Activated B cell treated with CpG ODN at 0.5 μM for 24 hours (primary cell): ENCODE measurements at regions of chr3 and their contacts with region 1.

Region 1: DNA sequence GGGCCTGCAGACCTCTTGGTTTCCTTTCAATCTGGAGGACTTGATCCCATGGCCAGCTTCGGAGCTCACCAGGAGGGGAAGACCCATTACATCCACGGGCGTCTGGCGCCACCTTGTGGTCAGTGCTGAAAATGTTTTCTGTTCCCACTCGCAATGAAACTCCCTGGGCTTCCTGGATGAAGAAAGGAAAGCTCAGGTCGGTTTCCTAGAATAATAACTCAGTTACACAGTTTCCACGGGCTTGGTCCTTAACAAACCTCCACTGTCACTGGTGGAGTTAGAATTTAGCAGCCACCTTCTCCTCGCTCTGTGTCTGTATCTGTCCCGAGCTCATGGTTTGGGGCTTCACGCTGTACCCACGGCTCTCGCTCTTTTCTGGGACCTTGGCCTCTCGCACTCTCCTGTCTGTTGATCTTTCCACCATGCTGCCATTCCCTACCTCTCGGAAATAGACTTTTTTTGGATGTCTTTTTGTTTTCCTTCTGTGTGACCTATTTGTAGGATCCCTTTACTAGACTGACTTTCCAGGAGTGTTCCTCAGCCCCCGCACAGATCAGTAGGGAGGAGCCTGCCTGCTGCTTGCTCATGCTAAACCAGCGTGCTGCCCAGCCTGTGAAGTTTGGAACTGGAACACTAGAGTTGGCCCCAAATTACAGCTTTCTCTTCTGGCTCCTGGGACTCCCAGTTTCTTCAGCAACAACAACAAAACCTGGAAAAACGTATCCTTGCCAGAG is 56.3 kb downstream of the IL20RB start:
- DNase-seq: peak; percentile 76
- ATAC-seq: peak; percentile 88
- H3K4me3 Mint-ChIP-seq: peak overlapping the region; percentile 65
- H3K27ac Mint-ChIP-seq: no peak overlapping the region
- H3K4me1 Mint-ChIP-seq: peaks cover 8% of the 10 kb centered on the region
- H3K27me3 Mint-ChIP-seq: no peaks in the 10 kb centered on the region
- CTCF ChIP-seq: no peak

Region 2: GRCh38 chr3:136250226-136250902 is 763.8 kb before region 1 on chr3 and contains the start of gene PCCB:
- CTCF ChIA-PET with region 1: no interaction called
- POLR2A ChIA-PET with region 1: no interaction called
- intact Hi-C with region 1: loop called (anchors 5 kb)
- DNase-seq: peak; percentile 88
- ATAC-seq: peak; percentile 96
- H3K4me3 Mint-ChIP-seq: peak within 1 kb of the TSS; percentile 92
- H3K27ac Mint-ChIP-seq: peak within 1 kb of the TSS; percentile 95
- H3K4me1 Mint-ChIP-seq: peaks cover 23% of the 10 kb centered on the region
- H3K27me3 Mint-ChIP-seq: no peaks in the 10 kb centered on the region
- CTCF ChIP-seq: no peak
- total RNA-seq, gene PCCB: 31.2 and 31.8 TPM in 2 replicates

Region 3: GRCh38 chr3:136390574-136390973 is 623.5 kb before region 1 on chr3:
- CTCF ChIA-PET with region 1: interaction called, 83 read pairs
- POLR2A ChIA-PET with region 1: no interaction called
- intact Hi-C with region 1: loop called (anchors 1 kb)
- DNase-seq: no peak
- ATAC-seq: no peak
- H3K4me3 Mint-ChIP-seq: no peak overlapping the region
- H3K27ac Mint-ChIP-seq: no peak overlapping the region
- H3K4me1 Mint-ChIP-seq: peaks cover 3% of the 10 kb centered on the region
- H3K27me3 Mint-ChIP-seq: no peaks in the 10 kb centered on the region
- CTCF ChIP-seq: no peak

Region 4: GRCh38 chr3:136624894-136625815 is 389.0 kb before region 1 on chr3:
- CTCF ChIA-PET with region 1: no interaction called
- POLR2A ChIA-PET with region 1: no interaction called
- intact Hi-C with region 1: loop called (anchors 10 kb)
- DNase-seq: no peak
- ATAC-seq: peak; percentile 49
- H3K4me3 Mint-ChIP-seq: no peak overlapping the region
- H3K27ac Mint-ChIP-seq: no peak overlapping the region
- H3K4me1 Mint-ChIP-seq: peaks cover 38% of the 10 kb centered on the region
- H3K27me3 Mint-ChIP-seq: no peaks in the 10 kb centered on the region
- CTCF ChIP-seq: no peak

Region 5: DNA sequence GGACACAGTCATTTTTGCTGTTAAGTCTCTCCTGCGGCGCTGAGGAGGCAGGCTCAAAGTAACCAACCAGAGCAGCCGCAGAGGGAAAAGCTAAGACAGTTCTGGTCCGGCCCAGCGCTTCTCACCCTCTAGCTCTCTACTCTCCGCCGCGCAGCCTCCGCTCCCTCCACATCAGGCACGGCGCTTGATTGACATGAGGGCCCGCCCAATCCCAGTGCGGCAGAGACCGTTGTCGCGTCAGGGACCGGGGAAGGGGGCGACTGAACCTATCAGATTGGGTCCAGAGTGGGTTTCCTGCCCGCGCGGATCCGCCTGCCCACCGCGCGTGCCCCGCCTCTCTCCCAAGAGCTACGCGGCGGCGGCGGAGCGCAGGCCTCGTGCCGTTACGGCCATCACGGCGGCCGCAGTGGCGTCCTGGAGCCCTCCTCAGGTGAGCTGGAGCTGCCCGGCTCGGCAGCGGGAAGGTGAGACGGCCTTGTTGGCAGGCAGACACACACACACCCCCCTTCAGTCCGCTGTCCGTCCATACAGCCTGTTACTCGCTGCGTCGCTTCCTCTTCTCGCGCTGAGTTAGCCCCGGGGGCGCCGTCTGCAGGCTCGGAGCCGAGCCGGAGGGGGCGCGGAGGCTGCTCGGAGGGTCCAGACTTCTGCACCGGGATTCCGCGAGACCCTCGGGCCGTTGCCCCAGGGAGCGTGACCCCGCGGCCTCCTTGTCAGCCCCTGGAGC is 152.1 kb before region 1 on chr3 and contains the start of gene NCK1:
- CTCF ChIA-PET with region 1: interaction called, 6 read pairs
- POLR2A ChIA-PET with region 1: interaction called, 6 read pairs
- intact Hi-C with region 1: loop called (anchors 1 kb)
- DNase-seq: peak; percentile 92
- ATAC-seq: peak; percentile 94
- H3K4me3 Mint-ChIP-seq: peak within 1 kb of the TSS; percentile 93
- H3K27ac Mint-ChIP-seq: peak within 1 kb of the TSS; percentile 95
- H3K4me1 Mint-ChIP-seq: peaks cover 43% of the 10 kb centered on the region
- H3K27me3 Mint-ChIP-seq: no peaks in the 10 kb centered on the region
- CTCF ChIP-seq: no peak
- total RNA-seq, gene NCK1: 29.7 and 30.8 TPM in 2 replicates